ENCODE measurements at regions of chr11 and their contacts with region 1.

Region 1: DNA sequence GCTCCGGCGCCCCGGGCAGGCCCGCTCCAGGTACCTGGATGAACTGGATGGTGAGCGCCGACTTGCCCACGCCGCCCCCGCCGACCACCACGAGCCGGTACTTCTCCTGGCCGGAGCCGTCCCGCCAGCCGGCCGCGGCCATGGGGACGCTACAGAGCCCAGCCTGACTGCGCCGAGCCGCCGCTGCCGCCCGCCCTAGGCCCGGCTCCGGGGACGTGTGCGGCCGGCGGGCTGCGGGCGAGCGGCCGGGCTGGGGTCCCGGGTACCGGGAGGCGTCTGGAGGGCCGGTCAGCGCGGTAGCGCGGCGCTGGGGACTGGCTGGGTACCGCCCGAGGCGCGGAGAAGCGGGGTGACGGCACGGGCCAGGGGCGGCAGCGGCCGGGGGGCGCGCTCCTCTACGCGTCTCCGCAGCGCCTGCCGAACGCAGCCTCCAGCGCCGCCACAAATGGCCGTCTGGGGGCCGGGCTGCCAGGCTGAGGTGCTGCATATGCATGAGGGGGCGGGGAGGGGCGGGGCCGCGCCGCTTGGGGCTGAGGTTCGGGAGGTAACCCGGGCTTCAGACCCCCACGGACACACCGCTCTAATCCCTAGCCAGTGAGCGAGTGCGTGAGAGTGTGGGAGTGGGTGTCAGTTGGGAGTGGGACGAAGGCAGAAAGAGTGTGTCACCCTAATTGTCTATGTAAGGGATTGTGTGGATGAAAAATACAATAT is at the start of gene RRAS2:
- DNase-seq: peak; percentile 86
- H3K4me3 ChIP-seq: peak within 1 kb of the TSS; percentile 78
- H3K27ac ChIP-seq: peak within 1 kb of the TSS; percentile 71
- H3K4me1 ChIP-seq: peaks cover 7% of the 10 kb centered on the region
- H3K27me3 ChIP-seq: no peaks in the 10 kb centered on the region
- CTCF ChIP-seq: no peak
- total RNA-seq, gene RRAS2: 23.3 and 24.8 TPM in 2 replicates

Region 2: GRCh38 chr11:13818325-13818724 is 540.6 kb before region 1 on chr11:
- CTCF ChIA-PET with region 1: no interaction called
- POLR2A ChIA-PET with region 1: no interaction called
- intact Hi-C with region 1: no loop called
- DNase-seq: no peak
- H3K4me3 ChIP-seq: no peak overlapping the region
- H3K27ac ChIP-seq: no peak overlapping the region
- H3K4me1 ChIP-seq: no peaks in the 10 kb centered on the region
- H3K27me3 ChIP-seq: peaks cover 3% of the 10 kb centered on the region
- CTCF ChIP-seq: no peak

Region 3: DNA sequence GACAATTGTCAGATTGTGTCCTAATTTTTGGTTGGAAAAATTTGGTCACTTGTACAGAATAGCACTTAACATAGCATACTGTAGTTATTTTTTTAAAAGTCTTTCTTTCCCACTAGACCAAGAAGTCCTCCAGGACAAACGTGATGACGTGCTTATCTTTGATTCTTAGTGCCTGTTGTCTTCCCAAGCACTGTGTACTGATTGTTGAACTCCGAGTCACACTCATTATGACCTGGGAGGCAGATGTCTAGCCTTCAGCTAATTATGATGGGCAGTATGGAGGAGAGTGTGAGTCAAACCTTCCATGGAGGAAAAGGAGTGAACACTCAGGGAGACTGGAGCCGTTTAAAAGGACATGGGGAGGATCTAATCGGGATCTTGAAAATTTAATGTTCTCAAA is 276.5 kb before region 1 on chr11:
- CTCF ChIA-PET with region 1: no interaction called
- POLR2A ChIA-PET with region 1: no interaction called
- intact Hi-C with region 1: no loop called
- DNase-seq: no peak
- H3K4me3 ChIP-seq: no peak overlapping the region
- H3K27ac ChIP-seq: no peak overlapping the region
- H3K4me1 ChIP-seq: no peaks in the 10 kb centered on the region
- H3K27me3 ChIP-seq: peaks cover 13% of the 10 kb centered on the region
- CTCF ChIP-seq: no peak

Region 4: GRCh38 chr11:14499554-14500180 is 140.8 kb after region 1 on chr11 and contains the start of gene COPB1:
- CTCF ChIA-PET with region 1: no interaction called
- POLR2A ChIA-PET with region 1: interaction called, 11 read pairs
- intact Hi-C with region 1: no loop called
- DNase-seq: peak; percentile 92
- H3K4me3 ChIP-seq: peak within 1 kb of the TSS; percentile 81
- H3K27ac ChIP-seq: peak within 1 kb of the TSS; percentile 78
- H3K4me1 ChIP-seq: no peaks in the 10 kb centered on the region
- H3K27me3 ChIP-seq: no peaks in the 10 kb centered on the region
- CTCF ChIP-seq: no peak
- total RNA-seq, gene COPB1: 91.9 and 94.6 TPM in 2 replicates

Measured in A673 (cell line).